Activated T-helper 1 cell treated with anti-CD3 and anti-CD28 coated beads, Interleukin-12 subunit alpha, Interleukin-12 subunit beta, Interleukin-2, Interleukin-4 antibody, amounts not matched to agents 30 ng/mL and 10 ng/mL and 1 ng/mL, durations not matched to agents 14 hours and 24 hours and 36 hours (primary cell): ENCODE measurements at regions of chr9 and their contacts with region 1.

Region 1: GRCh38 chr9:131502781-131503625 is at the start of gene POMT1:
- DNase-seq: peak; percentile 90
- H3K4me3 Mint-ChIP-seq: peak within 1 kb of the TSS; percentile 93
- H3K27ac Mint-ChIP-seq: peak within 1 kb of the TSS; percentile 90
- H3K4me1 Mint-ChIP-seq: peaks cover 48% of the 10 kb centered on the region
- H3K27me3 Mint-ChIP-seq: no peaks in the 10 kb centered on the region
- total RNA-seq, gene POMT1: 39.1 and 39.3 TPM in 2 replicates

Region 2: DNA sequence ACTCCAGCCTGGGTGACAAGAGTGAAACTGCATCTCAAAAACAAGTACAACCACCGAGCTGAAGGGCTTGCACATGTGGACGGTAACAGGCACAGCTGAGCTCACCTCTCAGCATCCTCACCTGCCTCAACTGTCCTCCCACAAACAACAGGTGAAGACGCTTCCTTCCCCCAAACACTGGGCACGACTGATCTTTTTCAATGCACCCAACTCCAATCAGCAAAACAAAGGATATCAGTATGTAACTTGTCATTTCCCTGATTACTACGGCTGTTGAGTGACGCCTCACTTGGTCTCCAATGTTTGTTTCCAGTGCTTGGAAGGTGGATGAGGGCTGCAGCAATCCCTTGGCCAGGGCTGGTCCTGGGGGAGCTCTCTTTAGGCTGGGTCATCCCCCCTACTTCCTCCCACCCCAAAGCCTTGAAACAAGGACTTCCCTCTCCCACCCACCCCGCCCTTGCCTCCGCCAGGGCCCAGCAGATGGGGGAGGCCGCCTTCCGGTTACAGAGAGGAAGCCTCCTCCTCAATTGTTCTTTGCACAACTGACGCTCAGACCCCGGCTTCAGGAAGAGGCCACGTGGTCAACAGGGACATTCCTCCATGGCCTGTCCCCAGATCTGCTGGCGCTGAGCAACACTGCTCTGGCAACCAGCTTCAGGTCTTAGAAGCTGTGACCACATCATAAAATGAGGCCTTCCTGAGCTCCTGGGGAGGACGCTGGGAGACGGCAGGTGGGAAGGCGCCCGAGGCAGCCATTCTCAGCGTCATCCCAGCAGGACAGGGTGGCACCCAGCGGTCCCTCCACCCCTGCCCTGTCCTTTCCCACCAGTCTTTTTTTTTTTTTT is 232.6 kb before region 1 on chr9:
- intact Hi-C with region 1: loop called (anchors 2 kb)
- DNase-seq: no peak
- H3K4me3 Mint-ChIP-seq: peak overlapping the region; percentile 100
- H3K27ac Mint-ChIP-seq: peak overlapping the region; percentile 86
- H3K4me1 Mint-ChIP-seq: peaks cover 75% of the 10 kb centered on the region
- H3K27me3 Mint-ChIP-seq: no peaks in the 10 kb centered on the region

Region 3: GRCh38 chr9:131393622-131394463 is 109.2 kb before region 1 on chr9 and contains the start of gene PRRC2B:
- intact Hi-C with region 1: loop called (anchors 1 kb)
- DNase-seq: peak; percentile 76
- H3K4me3 Mint-ChIP-seq: peak within 1 kb of the TSS; percentile 89
- H3K27ac Mint-ChIP-seq: peak within 1 kb of the TSS; percentile 93
- H3K4me1 Mint-ChIP-seq: peaks cover 49% of the 10 kb centered on the region
- H3K27me3 Mint-ChIP-seq: peaks cover 21% of the 10 kb centered on the region
- total RNA-seq, gene PRRC2B: 103 and 108 TPM in 2 replicates

Region 4: GRCh38 chr9:131530920-131531832 is 28.2 kb after region 1 on chr9 and contains the start of gene UCK1:
- intact Hi-C with region 1: loop called (anchors 1 kb)
- DNase-seq: peak; percentile 71
- H3K4me3 Mint-ChIP-seq: peak within 1 kb of the TSS; percentile 84
- H3K27ac Mint-ChIP-seq: peak within 1 kb of the TSS; percentile 52
- H3K4me1 Mint-ChIP-seq: peaks cover 13% of the 10 kb centered on the region
- H3K27me3 Mint-ChIP-seq: peaks cover 1% of the 10 kb centered on the region
- total RNA-seq, gene UCK1: 26.9 and 28.0 TPM in 2 replicates

Region 5: DNA sequence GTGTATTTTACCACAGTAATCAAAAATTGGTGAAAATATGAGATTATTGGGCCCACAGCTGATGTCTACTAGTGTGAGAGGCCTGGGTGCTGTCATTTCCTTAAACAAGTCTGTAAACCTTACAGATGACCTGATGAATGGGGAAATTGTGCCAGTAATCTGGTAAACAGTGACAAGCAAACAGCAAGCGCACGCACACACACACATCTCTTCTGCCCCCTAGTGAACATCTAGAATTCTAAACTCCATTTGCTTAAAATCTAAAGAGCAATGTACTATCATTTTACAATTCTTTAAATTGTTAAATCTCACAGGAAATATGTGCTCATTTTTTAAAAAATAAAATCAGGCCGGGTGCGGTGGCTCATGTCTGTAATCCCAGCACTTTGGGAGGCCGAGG is 244.4 kb after region 1 on chr9:
- intact Hi-C with region 1: loop called (anchors 1 kb)
- DNase-seq: no peak
- H3K4me3 Mint-ChIP-seq: no peak overlapping the region
- H3K27ac Mint-ChIP-seq: no peak overlapping the region
- H3K4me1 Mint-ChIP-seq: peaks cover 34% of the 10 kb centered on the region
- H3K27me3 Mint-ChIP-seq: peaks cover 5% of the 10 kb centered on the region